Common myeloid progenitor, CD34-positive (primary cell): ENCODE measurements at regions of chr17 and their contacts with region 1.

Region 1: DNA sequence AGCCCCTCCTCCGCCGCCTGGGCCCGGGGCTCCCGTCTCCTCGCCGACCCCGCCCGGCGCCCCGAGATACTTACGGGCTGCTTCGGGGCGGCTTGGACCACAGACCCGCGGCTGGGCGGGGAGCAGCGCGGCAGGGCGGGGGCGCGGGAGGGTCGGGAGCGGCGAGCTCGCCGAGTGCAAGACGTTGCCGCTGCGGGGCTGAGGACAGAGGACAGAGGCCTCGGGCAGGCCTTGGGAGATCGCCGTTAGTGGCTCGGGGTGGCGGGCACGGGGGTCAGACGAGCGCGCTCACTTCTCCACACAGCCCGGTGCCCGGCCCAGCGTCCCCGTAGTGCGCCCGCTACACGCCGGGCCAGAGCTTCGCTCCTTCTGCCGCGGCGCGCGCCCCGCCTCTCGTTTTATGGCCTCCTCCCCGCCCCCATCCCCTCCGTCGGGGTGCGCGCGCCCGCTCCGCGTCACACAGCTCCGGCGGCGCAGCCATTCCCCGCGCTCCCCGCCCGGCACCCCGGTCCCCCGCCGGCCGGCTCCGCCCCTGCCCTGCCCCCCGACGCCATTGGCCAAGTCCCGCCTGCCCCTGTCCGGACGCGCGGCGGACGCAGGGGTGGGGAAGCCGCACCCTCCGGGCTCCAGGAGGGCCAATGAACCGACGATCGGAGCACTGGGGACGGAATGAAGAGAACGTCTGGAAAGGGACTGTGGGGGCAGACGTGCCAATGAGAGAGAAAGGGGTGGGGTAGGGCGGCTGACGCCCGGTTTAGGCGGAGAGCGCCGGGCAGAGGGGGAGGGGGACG is at the start of gene TOB1:
- DNase-seq: peak; percentile 93 to 97 (median 97)
- H3K4me3 ChIP-seq: peak within 1 kb of the TSS; percentile 75 to 95 (median 84)
- H3K27ac ChIP-seq: peak within 1 kb of the TSS; percentile 74 to 86
- H3K4me1 ChIP-seq: peaks cover 23 to 36% (median 30%) of the 10 kb centered on the region in 4 experiments
- H3K27me3 ChIP-seq: peaks cover 0 to 6% (median 2%) of the 10 kb centered on the region in 5 experiments

Region 2: DNA sequence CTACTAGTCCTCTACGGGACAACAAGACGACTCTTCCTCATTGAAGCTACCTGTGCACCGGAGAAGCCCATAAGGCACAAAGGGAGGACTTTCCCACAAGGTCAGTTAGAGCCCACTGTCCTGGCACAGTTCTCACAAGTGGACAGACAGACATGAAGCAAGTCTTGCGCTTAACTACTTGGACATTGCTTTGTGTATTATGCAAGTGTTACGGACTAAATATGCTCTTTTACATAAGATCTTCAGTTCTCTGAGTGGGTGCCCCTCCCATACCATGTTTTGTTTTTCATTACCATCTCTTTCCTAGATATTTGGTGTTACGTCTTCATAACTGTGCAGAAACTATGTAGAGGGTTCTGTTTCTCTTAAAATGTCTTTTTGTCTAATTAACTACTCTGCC is 116.9 kb before region 1 on chr17:
- CTCF ChIA-PET with region 1: no interaction called
- POLR2A ChIA-PET with region 1: no interaction called
- DNase-seq: no peak
- H3K4me3 ChIP-seq: no peak overlapping the region
- H3K27ac ChIP-seq: no peak overlapping the region
- H3K4me1 ChIP-seq: no peaks in the 10 kb centered on the region
- H3K27me3 ChIP-seq: no peaks in the 10 kb centered on the region

Region 3: GRCh38 chr17:50931144-50931908 is 65.1 kb after region 1 on chr17:
- CTCF ChIA-PET with region 1: interaction called, 8 read pairs
- POLR2A ChIA-PET with region 1: interaction called, 30 read pairs
- DNase-seq: peak; percentile 79 to 92 (median 86)
- H3K4me3 ChIP-seq: peak overlapping the region; percentile 13 to 60 (median 47)
- H3K27ac ChIP-seq: no peak overlapping the region
- H3K4me1 ChIP-seq: peaks cover 2 to 45% (median 32%) of the 10 kb centered on the region in 4 experiments
- H3K27me3 ChIP-seq: no peaks in the 10 kb centered on the region

Region 4: GRCh38 chr17:50944054-50944901 is 78.1 kb after region 1 on chr17:
- CTCF ChIA-PET with region 1: interaction called, 480 read pairs
- POLR2A ChIA-PET with region 1: interaction called, 18 read pairs
- DNase-seq: peak; percentile 40 to 81 (median 73)
- H3K4me3 ChIP-seq: peak overlapping the region; percentile 1 to 75 (median 49)
- H3K27ac ChIP-seq: peak overlapping the region in 1 of 2 experiments; percentile 75
- H3K4me1 ChIP-seq: peaks cover 1 to 44% (median 35%) of the 10 kb centered on the region in 4 experiments
- H3K27me3 ChIP-seq: no peaks in the 10 kb centered on the region

Region 5: GRCh38 chr17:50949989-50950881 is 84.1 kb after region 1 on chr17:
- CTCF ChIA-PET with region 1: interaction called, 480 read pairs
- POLR2A ChIA-PET with region 1: interaction called, 18 read pairs
- DNase-seq: peak; percentile 72 to 91 (median 89)
- H3K4me3 ChIP-seq: peak overlapping the region in 4 of 7 experiments; percentile 16 to 31 (median 24)
- H3K27ac ChIP-seq: peak overlapping the region in 1 of 2 experiments; percentile 49
- H3K4me1 ChIP-seq: peaks cover 0 to 59% (median 45%) of the 10 kb centered on the region in 4 experiments
- H3K27me3 ChIP-seq: no peaks in the 10 kb centered on the region